Endothelial cell of umbilical vein (primary cell): ENCODE measurements at regions of chr13 and their contacts with region 1.

Region 1: GRCh38 chr13:99176309-99177276 is 24.1 kb upstream of the UBAC2 start:
- DNase-seq: peak; percentile 62
- H3K4me3 ChIP-seq: no peak overlapping the region
- H3K27ac ChIP-seq: no peak overlapping the region
- H3K4me1 ChIP-seq: no peaks in the 10 kb centered on the region
- H3K27me3 ChIP-seq: peaks cover 6 to 14% of the 10 kb centered on the region in 2 experiments
- CTCF ChIP-seq: peak; percentile 86 to 94
- POLR2A ChIP-seq: no peak

Region 2: GRCh38 chr13:99087096-99087953 is 89.3 kb before region 1 on chr13:
- CTCF ChIA-PET with region 1: no interaction called
- POLR2A ChIA-PET with region 1: no interaction called
- dilution Hi-C with region 1: no loop called
- intact Hi-C with region 1: loop called (anchors 5 kb)
- DNase-seq: peak; percentile 88
- H3K4me3 ChIP-seq: peak overlapping the region; percentile 61 to 65 (median 63)
- H3K27ac ChIP-seq: peak overlapping the region; percentile 20
- H3K4me1 ChIP-seq: peaks cover 19% of the 10 kb centered on the region
- H3K27me3 ChIP-seq: no peaks in the 10 kb centered on the region
- CTCF ChIP-seq: peak in 1 of 2 donors; percentile 45
- POLR2A ChIP-seq: no peak

Region 3: GRCh38 chr13:99258210-99258860 is 81.7 kb after region 1 on chr13 and contains the start of gene GPR18:
- CTCF ChIA-PET with region 1: interaction called, 11 read pairs
- POLR2A ChIA-PET with region 1: no interaction called
- dilution Hi-C with region 1: loop called (anchors 25 kb)
- intact Hi-C with region 1: no loop called
- DNase-seq: peak; percentile 15
- H3K4me3 ChIP-seq: no peak within 1 kb of the TSS
- H3K27ac ChIP-seq: no peak within 1 kb of the TSS
- H3K4me1 ChIP-seq: peaks cover 9% of the 10 kb centered on the region
- H3K27me3 ChIP-seq: no peaks in the 10 kb centered on the region
- CTCF ChIP-seq: no peak
- POLR2A ChIP-seq: no peak
- total RNA-seq, gene GPR18: not detected in 2 replicates

Region 4: DNA sequence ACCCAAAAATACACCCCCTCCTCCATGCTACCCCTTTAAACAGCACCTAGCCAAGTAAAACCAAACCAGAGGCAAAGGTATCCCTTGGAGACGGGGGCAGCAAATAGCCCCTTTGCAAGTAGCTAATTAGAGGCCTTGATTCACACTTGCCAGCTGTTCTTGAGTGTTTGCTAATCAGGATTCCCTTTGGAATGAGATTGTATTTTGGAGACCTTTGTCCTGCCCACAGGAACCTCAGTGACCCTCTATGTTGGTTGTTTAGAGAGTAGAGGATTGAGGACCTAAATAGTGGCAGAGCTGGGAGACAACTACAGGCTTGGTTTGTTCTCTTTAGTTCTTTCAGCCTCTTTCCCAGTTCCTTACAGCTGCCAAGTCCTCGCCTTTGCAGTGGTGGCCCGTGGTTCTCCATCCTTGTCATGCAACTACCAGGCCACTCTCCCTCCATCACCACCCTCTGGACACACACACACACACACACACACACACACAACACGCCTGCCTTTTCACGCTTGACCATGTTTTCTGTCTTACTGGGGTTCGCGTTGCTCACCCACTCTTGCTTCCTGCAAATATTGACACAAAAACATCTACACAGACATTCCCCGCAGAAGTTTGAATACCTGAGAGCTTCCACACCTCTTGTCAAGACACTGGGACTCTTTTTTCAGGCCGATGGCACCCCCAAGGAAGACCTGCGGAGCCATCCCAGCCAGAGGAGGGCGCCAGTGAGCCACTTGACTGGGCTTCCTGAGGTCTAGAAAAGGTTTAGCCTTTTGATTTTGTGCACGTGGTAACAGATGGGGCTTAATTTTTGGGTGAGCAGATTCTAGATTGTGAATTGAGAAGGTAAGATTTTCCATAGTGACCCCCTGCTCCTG is 210.6 kb after region 1 on chr13:
- CTCF ChIA-PET with region 1: interaction called, 3 read pairs
- POLR2A ChIA-PET with region 1: no interaction called
- dilution Hi-C with region 1: no loop called
- intact Hi-C with region 1: loop called (anchors 2 kb)
- DNase-seq: peak; percentile 33
- H3K4me3 ChIP-seq: no peak overlapping the region
- H3K27ac ChIP-seq: no peak overlapping the region
- H3K4me1 ChIP-seq: no peaks in the 10 kb centered on the region
- H3K27me3 ChIP-seq: no peaks in the 10 kb centered on the region
- CTCF ChIP-seq: peak; percentile 74 to 86
- POLR2A ChIP-seq: no peak

Region 5: DNA sequence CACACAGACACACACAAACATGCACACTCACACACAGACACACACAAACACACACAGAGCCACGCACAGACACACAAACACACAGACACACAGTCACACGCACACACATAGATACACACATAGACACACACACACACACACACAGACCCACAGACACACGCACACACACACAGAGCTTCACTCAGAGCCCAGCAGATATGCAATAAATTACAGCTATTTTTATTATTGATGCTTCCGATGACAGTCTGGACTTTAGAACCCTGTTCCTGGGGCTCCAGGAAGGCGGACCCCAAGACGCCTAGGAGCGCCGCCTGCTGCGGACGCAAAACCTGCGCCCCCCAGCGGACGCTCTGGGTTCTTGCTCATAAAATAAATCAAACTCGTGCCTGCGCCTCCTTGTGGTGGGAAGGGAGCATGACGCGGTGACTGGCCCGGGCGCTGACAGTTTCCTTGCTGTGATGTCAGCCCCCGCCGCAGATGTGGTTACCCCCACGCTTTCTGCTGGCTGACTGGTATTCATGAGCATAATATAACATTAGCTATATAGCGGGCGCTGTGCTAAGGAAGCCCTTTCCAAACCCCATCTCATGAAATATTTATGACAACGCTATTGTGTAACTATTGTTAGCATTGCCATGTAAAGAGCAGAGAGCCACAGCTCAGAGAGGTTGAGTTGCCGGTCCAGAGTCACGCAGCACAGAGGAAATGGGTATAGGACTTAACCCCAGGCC is 260.3 kb after region 1 on chr13:
- CTCF ChIA-PET with region 1: interaction called, 42 read pairs
- POLR2A ChIA-PET with region 1: no interaction called
- dilution Hi-C with region 1: no loop called
- intact Hi-C with region 1: loop called (anchors 1 kb)
- DNase-seq: peak; percentile 84
- H3K4me3 ChIP-seq: no peak overlapping the region
- H3K27ac ChIP-seq: no peak overlapping the region
- H3K4me1 ChIP-seq: peaks cover 9% of the 10 kb centered on the region
- H3K27me3 ChIP-seq: peaks cover 13 to 29% of the 10 kb centered on the region in 2 experiments
- CTCF ChIP-seq: peak; percentile 100
- POLR2A ChIP-seq: no peak